ENCODE measurements at regions of chr6 and their contacts with region 1.

Region 1: DNA sequence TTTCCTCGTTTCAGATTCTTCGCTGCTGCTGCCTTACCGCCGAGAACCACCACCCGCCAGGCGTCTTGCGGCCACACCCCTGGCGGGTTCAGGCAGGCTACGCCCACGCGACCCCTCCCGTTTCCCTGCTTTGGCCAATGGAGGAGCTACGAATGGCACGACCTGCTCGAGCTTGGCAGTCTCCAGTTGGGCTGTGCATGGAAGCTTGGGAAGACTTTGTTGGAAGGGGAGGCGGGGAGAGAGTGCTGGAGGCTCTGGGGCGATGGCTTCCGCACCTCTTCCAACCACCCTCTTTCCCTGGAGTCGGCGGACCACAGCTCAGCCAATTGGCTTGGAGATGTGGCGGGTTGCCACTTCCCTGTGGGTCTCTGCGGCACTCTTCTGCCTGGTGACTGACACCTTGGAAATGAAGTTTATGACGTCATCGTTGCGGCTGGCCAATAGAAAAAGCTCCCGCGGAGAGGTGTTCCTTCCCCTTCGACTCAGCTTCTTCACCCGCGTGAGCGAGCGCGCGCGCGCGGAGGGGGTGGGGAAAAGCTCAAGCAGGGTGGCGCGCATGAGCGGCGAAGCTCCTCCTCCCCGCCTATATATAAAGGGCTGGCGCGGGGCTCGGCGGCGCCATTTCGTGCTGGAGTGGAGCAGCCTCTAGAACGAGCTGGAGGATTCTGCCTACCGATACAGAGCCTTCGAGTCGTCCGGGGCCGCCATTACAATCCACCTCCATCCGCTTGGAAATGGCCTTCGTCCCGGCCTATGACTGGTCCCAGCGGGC is 3.4 kb downstream of the BRD2 start:
- DNase-seq: peak; percentile 99 to 100
- ATAC-seq: peak; percentile 59 to 75 (median 66)
- H3K4me3 ChIP-seq: peak overlapping the region; percentile 61 to 100 (median 94)
- H3K27ac ChIP-seq: peak overlapping the region; percentile 93 to 100 (median 100)
- H3K4me1 ChIP-seq: peaks cover 9 to 42% (median 34%) of the 10 kb centered on the region in 9 donors
- H3K27me3 ChIP-seq: no peaks in the 10 kb centered on the region
- CTCF ChIP-seq: no peak

Region 2: DNA sequence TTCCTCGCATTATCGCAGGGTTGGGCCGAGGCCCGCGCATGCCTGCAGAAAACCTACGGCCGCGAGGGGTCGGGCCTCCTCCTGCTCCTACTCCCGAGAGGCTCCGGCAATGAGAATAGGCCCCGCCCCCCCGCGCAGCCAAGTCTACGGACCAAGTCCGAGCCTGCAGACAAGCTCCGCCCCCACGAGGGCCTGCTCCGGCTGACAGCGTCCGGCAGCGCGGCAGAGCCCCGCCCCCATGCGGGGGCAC is 776.2 kb before region 1 on chr6:
- intact Hi-C with region 1: loop called in 1 of 10 experiments (anchors 5 kb)
- DNase-seq: peak; percentile 100
- ATAC-seq: peak in 6 of 8 donors; percentile 85 to 95 (median 86)
- H3K4me3 ChIP-seq: peak overlapping the region in 7 of 10 donors; percentile 65 to 79 (median 75)
- H3K27ac ChIP-seq: peak overlapping the region; percentile 98 to 100 (median 99)
- H3K4me1 ChIP-seq: peaks cover 11 to 68% (median 52%) of the 10 kb centered on the region in 9 donors
- H3K27me3 ChIP-seq: no peaks in the 10 kb centered on the region
- CTCF ChIP-seq: peak; percentile 45 to 82 (median 64)

Region 3: DNA sequence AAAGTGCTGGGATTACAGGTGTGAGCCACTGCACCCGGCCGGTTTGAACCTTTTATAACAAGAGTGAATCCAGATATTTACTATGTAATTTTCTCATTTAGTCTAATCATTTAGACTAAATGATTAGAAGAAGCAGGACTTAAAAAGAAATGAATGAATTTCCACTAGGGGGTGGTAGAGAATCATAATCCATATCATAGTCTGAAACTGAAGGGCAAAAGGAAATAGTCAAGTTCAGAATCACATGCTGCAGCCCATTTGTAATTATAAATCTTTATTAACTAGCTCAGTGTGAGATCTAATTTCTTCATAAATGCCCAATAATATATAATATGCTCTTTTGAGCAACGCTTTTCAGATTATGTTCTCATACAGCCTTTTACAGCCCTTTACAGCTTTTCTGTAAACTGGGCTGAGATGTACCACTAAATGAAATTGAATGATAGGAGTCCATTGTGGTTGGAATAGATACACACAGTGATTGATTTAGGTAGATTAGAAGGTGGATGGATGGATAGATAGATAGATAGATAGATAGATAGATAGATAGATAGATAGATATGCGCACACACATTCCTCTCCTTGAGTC is 86.0 kb before region 1 on chr6:
- intact Hi-C with region 1: loop called in 1 of 10 experiments (anchors 5 kb)
- DNase-seq: no peak
- ATAC-seq: peak in 6 of 8 donors; percentile 31 to 76 (median 66)
- H3K4me3 ChIP-seq: no peak overlapping the region
- H3K27ac ChIP-seq: no peak overlapping the region
- H3K4me1 ChIP-seq: peaks cover 0 to 27% (median 0%) of the 10 kb centered on the region in 9 donors
- H3K27me3 ChIP-seq: no peaks in the 10 kb centered on the region
- CTCF ChIP-seq: peak; percentile 50 to 81 (median 68)

Region 4: DNA sequence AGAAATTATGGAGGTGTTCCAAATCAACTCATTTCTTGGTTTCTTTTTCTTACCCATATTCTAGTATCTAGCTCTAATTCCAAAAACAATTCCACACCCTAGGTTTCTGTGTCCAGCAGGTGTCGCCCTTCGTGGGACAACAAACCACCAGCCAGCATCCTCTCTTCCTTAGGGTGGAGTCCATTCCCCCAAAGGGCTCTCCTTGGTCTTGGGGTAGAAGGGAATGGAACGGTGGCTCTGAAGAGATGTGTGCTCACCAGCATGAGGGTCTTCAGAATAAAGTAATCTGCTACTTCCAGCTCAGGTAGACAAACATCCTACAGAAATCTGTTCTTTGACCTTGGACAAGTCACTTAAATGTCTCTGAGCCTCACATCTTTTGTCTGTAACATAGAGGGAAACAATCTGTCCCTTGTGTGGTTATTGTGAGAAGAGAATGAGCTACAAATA is 38.1 kb before region 1 on chr6:
- intact Hi-C with region 1: loop called in 3 of 10 experiments (anchors 2 to 5 kb)
- DNase-seq: peak; percentile 72 to 83
- ATAC-seq: peak; percentile 50 to 77 (median 68)
- H3K4me3 ChIP-seq: no peak overlapping the region
- H3K27ac ChIP-seq: peak overlapping the region in 1 of 10 donors; percentile 5
- H3K4me1 ChIP-seq: peaks cover 0 to 46% (median 0%) of the 10 kb centered on the region in 9 donors
- H3K27me3 ChIP-seq: no peaks in the 10 kb centered on the region
- CTCF ChIP-seq: peak; percentile 72 to 92 (median 82)

Region 5: GRCh38 chr6:32940656-32941213 is 31.0 kb before region 1 on chr6 and contains the start of gene HLA-DMB:
- intact Hi-C with region 1: loop called in 2 of 10 experiments (anchors 2 to 5 kb)
- DNase-seq: peak in 1 of 2 donors; percentile 86
- ATAC-seq: peak; percentile 94 to 97 (median 96)
- H3K4me3 ChIP-seq: peak within 1 kb of the TSS; percentile 8 to 62 (median 55)
- H3K27ac ChIP-seq: peak within 1 kb of the TSS; percentile 71 to 95 (median 84)
- H3K4me1 ChIP-seq: peaks cover 0 to 90% (median 15%) of the 10 kb centered on the region in 9 donors
- H3K27me3 ChIP-seq: no peaks in the 10 kb centered on the region
- CTCF ChIP-seq: no peak
- total RNA-seq, gene HLA-DMB: 2.7 to 79.8 (median 7.6) TPM

Region 6: DNA sequence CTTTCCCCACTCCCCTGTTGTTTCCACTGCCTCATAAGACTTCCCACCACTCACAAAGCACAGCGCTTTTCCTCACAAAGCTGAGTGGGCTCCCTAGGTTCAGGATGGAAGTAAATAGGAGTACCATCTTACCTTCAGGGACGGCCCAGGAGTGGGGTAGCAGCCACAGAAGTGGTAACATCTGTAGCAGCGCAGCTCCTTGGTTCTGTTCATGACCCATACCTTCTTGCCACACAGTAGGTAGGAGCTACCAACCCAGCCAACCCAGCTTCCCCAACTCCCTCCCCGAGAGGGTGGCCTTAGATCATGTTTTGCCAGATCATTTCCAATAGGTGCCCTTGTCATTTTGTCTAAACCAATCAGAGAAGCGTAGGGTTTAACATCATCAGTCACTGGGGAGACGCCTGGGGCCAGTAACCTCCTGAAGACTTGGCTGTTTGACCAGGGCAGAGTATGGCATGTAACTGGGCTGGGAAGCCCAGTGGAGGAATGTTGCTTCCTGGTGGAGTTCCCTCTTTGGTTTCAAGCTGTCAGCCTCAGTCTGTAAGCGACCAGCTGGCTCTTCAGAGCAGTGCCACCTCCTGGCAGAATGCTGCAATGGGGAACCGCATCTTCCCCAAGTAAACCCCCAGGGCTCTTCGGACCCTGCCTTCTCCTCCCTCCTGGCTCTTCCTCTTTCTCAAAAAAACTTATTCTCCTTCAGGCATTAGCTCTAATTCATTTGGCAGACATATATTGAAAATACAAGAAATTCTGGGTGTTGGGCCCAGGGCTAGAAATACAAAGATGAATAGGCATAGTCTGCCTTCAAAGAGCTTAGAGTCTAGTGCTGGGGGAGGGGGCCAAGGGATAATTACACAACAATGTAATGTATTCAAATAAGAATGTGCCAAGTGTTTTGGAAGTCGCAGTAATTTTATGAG is 18.7 kb before region 1 on chr6 and contains the start of gene HLA-DMA:
- intact Hi-C with region 1: loop called in 2 of 10 experiments (anchors 1 kb)
- DNase-seq: peak; percentile 70 to 92
- ATAC-seq: peak; percentile 98 to 100 (median 99)
- H3K4me3 ChIP-seq: peak within 1 kb of the TSS in 9 of 10 donors; percentile 19 to 55 (median 44)
- H3K27ac ChIP-seq: peak within 1 kb of the TSS in 9 of 10 donors; percentile 61 to 90 (median 74)
- H3K4me1 ChIP-seq: peaks cover 0 to 61% (median 16%) of the 10 kb centered on the region in 9 donors
- H3K27me3 ChIP-seq: no peaks in the 10 kb centered on the region
- CTCF ChIP-seq: peak; percentile 71 to 91 (median 84)
- total RNA-seq, gene HLA-DMA: 7.8 to 106 (median 14.5) TPM

Region 7: GRCh38 chr6:33200219-33201146 is 228.7 kb after region 1 on chr6 and contains the starts of genes RXRB and SLC39A7:
- intact Hi-C with region 1: loop called in 1 of 10 experiments (anchors 5 kb)
- DNase-seq: peak; percentile 99 to 100
- ATAC-seq: peak; percentile 84 to 95 (median 92)
- H3K4me3 ChIP-seq: peak within 1 kb of the TSS; percentile 56 to 97 (median 80)
- H3K27ac ChIP-seq: peak within 1 kb of the TSS; percentile 94 to 99 (median 98)
- H3K4me1 ChIP-seq: peaks cover 27 to 78% (median 66%) of the 10 kb centered on the region in 9 donors
- H3K27me3 ChIP-seq: no peaks in the 10 kb centered on the region
- CTCF ChIP-seq: no peak
- total RNA-seq, gene RXRB: 29.7 to 39.1 (median 33.2) TPM
- total RNA-seq, gene SLC39A7: 44.8 to 104 (median 53.1) TPM